ENCODE measurements at regions of chr17 and their contacts with region 1.

Region 1: GRCh38 chr17:7136266-7136877 is 21.8 kb upstream of the ASGR2 start:
- DNase-seq: no peak
- H3K4me3 ChIP-seq: peak overlapping the region in 2 of 4 donors; percentile 13 to 25
- H3K27ac ChIP-seq: peak overlapping the region in 1 of 4 donors; percentile 31
- H3K4me1 ChIP-seq: peaks cover 6 to 79% (median 14%) of the 10 kb centered on the region in 3 donors
- H3K27me3 ChIP-seq: peaks cover 0 to 44% (median 0%) of the 10 kb centered on the region in 4 donors
- CTCF ChIP-seq: peak; percentile 80 to 95 (median 93)
- POLR2A ChIP-seq: no peak

Region 2: DNA sequence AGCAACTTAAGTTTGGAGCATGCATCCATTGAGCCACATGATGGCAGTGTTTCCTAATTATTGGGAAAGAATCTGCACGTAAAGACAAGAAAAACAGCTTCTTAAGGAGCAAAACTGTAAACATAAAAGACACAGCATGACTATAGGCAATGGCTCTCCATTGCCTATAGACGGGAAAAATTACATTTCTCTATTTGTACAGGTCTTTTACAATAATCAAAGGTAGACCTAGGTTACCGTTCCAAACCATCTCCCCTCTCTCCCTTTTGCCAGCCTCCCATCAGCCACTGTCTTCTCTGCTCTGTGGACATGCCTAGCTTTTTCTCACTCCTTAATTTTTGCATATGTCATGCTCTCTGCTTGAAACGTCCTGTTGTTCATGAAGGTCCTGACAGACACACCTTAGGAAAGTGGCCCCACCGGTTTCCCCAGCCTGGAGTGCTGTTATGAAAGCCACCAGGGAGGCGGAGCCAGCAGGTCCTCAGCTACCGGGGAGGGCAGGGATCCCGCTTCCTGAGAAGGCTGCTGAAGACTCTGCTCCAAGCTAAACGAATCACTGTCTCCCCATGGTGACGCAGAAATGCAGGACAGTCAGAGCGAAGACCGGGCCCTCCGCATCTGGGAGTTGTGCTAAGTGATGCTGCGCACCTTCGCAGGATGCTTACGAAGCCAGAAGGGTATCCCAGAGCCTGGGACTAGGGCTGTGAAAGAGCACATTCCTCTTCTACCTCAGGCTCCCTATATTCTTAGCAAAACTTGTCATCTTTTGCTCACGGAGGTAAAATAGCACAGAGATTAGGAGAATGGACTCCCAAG is 90.3 kb before region 1 on chr17:
- intact Hi-C with region 1: loop called (anchors 5 kb)
- DNase-seq: no peak
- H3K4me3 ChIP-seq: peak overlapping the region; percentile 2 to 56 (median 40)
- H3K27ac ChIP-seq: peak overlapping the region; percentile 80 to 95 (median 86)
- H3K4me1 ChIP-seq: peaks cover 30 to 65% (median 34%) of the 10 kb centered on the region in 3 donors
- H3K27me3 ChIP-seq: peaks cover 0 to 40% (median 2%) of the 10 kb centered on the region in 4 donors
- CTCF ChIP-seq: peak; percentile 51 to 89 (median 78)
- POLR2A ChIP-seq: no peak